Activated CD4-positive, alpha-beta T cell treated with anti-CD3 and anti-CD28 coated beads, Interleukin-2, amount 10 ng/mL, durations not matched to agents 24 days and 14 days (primary cell): ENCODE measurements at regions of chr1 and their contacts with region 1.

Region 1: GRCh38 chr1:189550498-189550897 is 927.2 kb downstream of the BRINP3 start:
- DNase-seq: no peak
- H3K4me3 Mint-ChIP-seq: no peak overlapping the region
- H3K27ac Mint-ChIP-seq: no peak overlapping the region
- H3K4me1 Mint-ChIP-seq: no peaks in the 10 kb centered on the region
- H3K27me3 Mint-ChIP-seq: no peaks in the 10 kb centered on the region

Region 2: GRCh38 chr1:189524506-189524905 is 26.0 kb before region 1 on chr1:
- intact Hi-C with region 1: loop called (anchors 1 kb)
- DNase-seq: no peak
- H3K4me3 Mint-ChIP-seq: no peak overlapping the region
- H3K27ac Mint-ChIP-seq: no peak overlapping the region
- H3K4me1 Mint-ChIP-seq: no peaks in the 10 kb centered on the region
- H3K27me3 Mint-ChIP-seq: no peaks in the 10 kb centered on the region